Activated CD4-positive, alpha-beta memory T cell treated with anti-CD3 and anti-CD28 coated beads, Interleukin-2, amount 10 ng/mL, durations not matched to agents 7 days and 5 days (primary cell): ENCODE measurements at regions of chr10 and their contacts with region 1.

Region 1: DNA sequence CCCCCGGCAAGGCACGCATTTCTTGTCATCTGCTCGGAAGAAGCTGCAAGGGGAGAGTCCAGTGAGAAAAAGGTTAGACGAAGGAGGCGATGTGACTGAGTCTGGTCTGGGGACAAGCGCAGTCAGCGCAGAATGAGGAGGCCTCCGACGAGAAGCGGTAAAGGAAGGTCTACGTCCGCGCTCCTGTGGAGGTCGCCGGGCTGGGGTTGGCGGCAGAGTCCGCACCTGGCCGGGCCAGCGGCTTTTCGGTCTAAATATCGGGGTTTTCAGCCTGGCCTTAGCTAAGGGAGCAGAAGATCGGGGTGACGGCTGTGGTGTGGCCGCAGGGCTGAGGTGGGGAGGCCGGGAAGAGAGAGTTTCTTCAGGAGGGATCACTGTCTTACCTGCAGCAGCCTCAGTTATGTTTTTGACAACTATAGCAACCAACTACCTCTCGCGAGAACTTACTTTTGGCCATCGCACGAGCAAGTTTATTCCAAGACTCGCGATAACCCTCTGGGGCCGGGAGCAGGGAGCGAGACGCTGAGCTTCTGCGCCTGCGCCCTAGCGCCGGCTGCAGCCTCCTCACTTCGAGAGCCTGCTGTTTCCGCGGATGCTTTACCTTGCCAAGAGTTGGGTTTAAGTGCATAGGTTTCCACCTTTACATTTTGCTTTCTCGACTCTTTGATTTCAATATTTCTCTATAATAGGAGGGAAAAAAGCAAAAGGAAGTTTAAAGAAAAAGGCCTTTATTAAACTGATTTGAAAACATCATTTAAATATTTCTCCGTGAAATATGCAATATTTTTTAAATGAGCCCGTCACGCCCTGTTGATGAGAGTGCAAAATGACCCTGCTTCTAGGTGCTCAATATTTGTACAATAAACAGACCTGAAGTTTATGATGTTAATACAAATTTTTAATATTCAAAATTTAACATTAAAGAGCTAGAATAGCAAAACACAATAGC is at the start of gene CFAP70:
- DNase-seq: peak; percentile 95
- H3K4me3 Mint-ChIP-seq: peak within 1 kb of the TSS; percentile 93
- H3K27ac Mint-ChIP-seq: peak within 1 kb of the TSS; percentile 71
- H3K4me1 Mint-ChIP-seq: peaks cover 21% of the 10 kb centered on the region
- H3K27me3 Mint-ChIP-seq: peaks cover 11% of the 10 kb centered on the region
- total RNA-seq, gene CFAP70: 0.28 to 0.70 TPM

Region 2: GRCh38 chr10:73306171-73306708 is 52.4 kb before region 1 on chr10:
- CTCF ChIA-PET with region 1: no interaction called
- POLR2A ChIA-PET with region 1: no interaction called
- DNase-seq: no peak
- H3K4me3 Mint-ChIP-seq: no peak overlapping the region
- H3K27ac Mint-ChIP-seq: no peak overlapping the region
- H3K4me1 Mint-ChIP-seq: no peaks in the 10 kb centered on the region
- H3K27me3 Mint-ChIP-seq: no peaks in the 10 kb centered on the region

Region 3: GRCh38 chr10:73413528-73414229 is 55.1 kb after region 1 on chr10 and contains the start of gene ANXA7:
- CTCF ChIA-PET with region 1: interaction called, 4 read pairs
- POLR2A ChIA-PET with region 1: interaction called, 24 read pairs
- DNase-seq: peak; percentile 95
- H3K4me3 Mint-ChIP-seq: peak within 1 kb of the TSS; percentile 84
- H3K27ac Mint-ChIP-seq: peak within 1 kb of the TSS; percentile 83
- H3K4me1 Mint-ChIP-seq: peaks cover 53% of the 10 kb centered on the region
- H3K27me3 Mint-ChIP-seq: peaks cover 3% of the 10 kb centered on the region
- total RNA-seq, gene ANXA7: 98.7 to 107 TPM